ENCODE measurements at regions of chr10 and their contacts with region 1.

Region 1: GRCh38 chr10:102132563-102133372 is at the start of gene PPRC1:
- DNase-seq: peak; percentile 99
- ATAC-seq: peak; percentile 95 to 96
- H3K4me3 ChIP-seq: peak within 1 kb of the TSS; percentile 92
- H3K27ac ChIP-seq: peak within 1 kb of the TSS; percentile 98 to 99
- H3K4me1 ChIP-seq: peaks cover 40% of the 10 kb centered on the region
- CTCF ChIP-seq: peak; percentile 92
- EP300 ChIP-seq: no peak
- POLR2A ChIP-seq: peak; percentile 69
- RAD21 ChIP-seq: peak; percentile 74 to 78
- polyA plus RNA-seq, gene PPRC1: 27.0 and 34.1 TPM in 2 replicates

Region 2: GRCh38 chr10:102114861-102115618 is 17.7 kb before region 1 on chr10:
- CTCF ChIA-PET with region 1: interaction called, 45 read pairs
- POLR2A ChIA-PET with region 1: interaction called, 12 read pairs
- DNase-seq: peak; percentile 73 to 76
- ATAC-seq: peak; percentile 67 to 87
- H3K4me3 ChIP-seq: peak overlapping the region; percentile 90
- H3K27ac ChIP-seq: peak overlapping the region; percentile 95 to 96
- H3K4me1 ChIP-seq: peaks cover 63% of the 10 kb centered on the region
- CTCF ChIP-seq: no peak
- EP300 ChIP-seq: no peak
- POLR2A ChIP-seq: peak; percentile 95
- RAD21 ChIP-seq: no peak

Region 3: GRCh38 chr10:102120142-102120990 is 12.4 kb before region 1 on chr10 and contains the start of gene LDB1:
- CTCF ChIA-PET with region 1: interaction called, 45 read pairs
- POLR2A ChIA-PET with region 1: interaction called, 3 read pairs
- DNase-seq: peak; percentile 72 to 81
- ATAC-seq: peak; percentile 60 to 77
- H3K4me3 ChIP-seq: peak within 1 kb of the TSS; percentile 97
- H3K27ac ChIP-seq: peak within 1 kb of the TSS; percentile 85 to 98
- H3K4me1 ChIP-seq: peaks cover 53% of the 10 kb centered on the region
- CTCF ChIP-seq: peak; percentile 4; the same call in 1 of the 3 replicates
- EP300 ChIP-seq: no peak
- POLR2A ChIP-seq: peak; percentile 62
- RAD21 ChIP-seq: no peak
- polyA plus RNA-seq, gene LDB1: 47.0 and 47.5 TPM in 2 replicates

Region 4: DNA sequence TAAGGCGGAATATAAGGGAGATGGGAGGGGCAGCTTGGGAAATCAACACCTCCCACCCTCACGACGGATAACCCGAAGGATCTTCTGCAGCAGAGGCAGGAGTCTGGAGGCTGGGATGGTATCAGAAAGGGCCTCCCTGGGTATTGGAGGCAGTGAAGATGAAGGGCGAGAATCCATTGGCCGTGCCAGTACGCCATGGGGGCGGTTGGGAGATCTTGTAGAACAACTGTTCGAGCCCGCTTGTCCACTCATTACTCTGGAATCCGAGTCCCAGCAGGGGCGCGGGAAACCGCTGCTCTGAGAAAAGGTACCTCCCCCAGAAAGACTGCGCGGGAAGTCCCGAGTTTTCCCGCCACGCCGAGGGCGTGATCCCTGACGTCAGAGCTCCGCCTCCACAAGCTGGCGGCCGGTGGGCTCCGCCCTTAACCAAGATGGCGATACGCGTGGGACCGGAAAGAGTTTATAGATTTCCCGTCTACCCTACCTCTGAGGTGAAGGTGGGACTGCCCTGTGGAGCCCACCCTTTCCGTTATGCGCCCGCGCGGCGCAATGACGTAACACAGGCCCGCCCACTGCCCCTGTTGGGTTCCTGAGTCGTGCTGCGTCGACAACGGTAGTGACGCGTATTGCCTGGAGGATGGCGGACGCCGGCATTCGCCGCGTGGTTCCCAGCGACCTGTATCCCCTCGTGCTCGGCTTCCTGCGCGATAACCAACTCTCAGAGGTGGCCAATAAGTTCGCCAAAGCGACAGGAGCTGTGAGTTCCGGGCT is 19.2 kb after region 1 on chr10 and contains the start of gene NOLC1:
- CTCF ChIA-PET with region 1: interaction called, 40 read pairs
- POLR2A ChIA-PET with region 1: interaction called, 6 read pairs
- DNase-seq: peak; percentile 92 to 99
- ATAC-seq: peak; percentile 86 to 92
- H3K4me3 ChIP-seq: peak within 1 kb of the TSS; percentile 75
- H3K27ac ChIP-seq: peak within 1 kb of the TSS; percentile 86 to 91
- H3K4me1 ChIP-seq: peaks cover 28% of the 10 kb centered on the region
- CTCF ChIP-seq: no peak
- EP300 ChIP-seq: no peak
- POLR2A ChIP-seq: peak; percentile 94
- RAD21 ChIP-seq: no peak
- polyA plus RNA-seq, gene NOLC1: 128 and 188 TPM in 2 replicates

Region 5: GRCh38 chr10:102167861-102168260 is 35.1 kb after region 1 on chr10:
- CTCF ChIA-PET with region 1: interaction called, 25 read pairs
- POLR2A ChIA-PET with region 1: no interaction called
- DNase-seq: no peak
- ATAC-seq: 0 out of 6 replicates have a peak, but pooled peaks of 1 of the 2 experiments have one; percentile 12
- H3K4me3 ChIP-seq: no peak overlapping the region
- H3K27ac ChIP-seq: no peak overlapping the region
- H3K4me1 ChIP-seq: peaks cover 3% of the 10 kb centered on the region; the same call in 1 of the 3 replicates
- CTCF ChIP-seq: no peak
- EP300 ChIP-seq: no peak
- POLR2A ChIP-seq: no peak
- RAD21 ChIP-seq: no peak

Region 6: DNA sequence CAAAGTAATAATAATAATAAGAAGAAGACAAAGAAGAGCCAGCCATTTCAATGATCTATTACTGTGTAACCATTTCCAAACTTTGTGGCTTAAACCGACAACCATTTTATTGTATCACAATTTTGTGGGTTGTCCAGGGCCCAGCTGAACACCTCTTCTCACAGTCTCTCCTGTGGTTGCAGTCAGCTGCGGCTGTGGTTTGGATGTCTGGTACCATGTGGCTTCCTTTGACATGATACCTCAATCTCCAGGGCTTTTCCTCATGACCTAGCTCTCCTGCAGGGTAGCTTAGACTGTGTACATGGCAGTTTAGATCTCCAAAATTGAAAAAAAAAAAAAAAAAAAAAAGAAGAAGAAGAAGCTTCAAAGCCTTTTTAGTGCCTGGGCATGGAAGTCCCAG is 190.1 kb after region 1 on chr10:
- CTCF ChIA-PET with region 1: no interaction called
- POLR2A ChIA-PET with region 1: no interaction called
- DNase-seq: no peak
- ATAC-seq: no peak; a peak in 1 of 6 replicates
- H3K4me3 ChIP-seq: no peak overlapping the region
- H3K27ac ChIP-seq: no peak overlapping the region
- H3K4me1 ChIP-seq: no peaks in the 10 kb centered on the region
- CTCF ChIP-seq: no peak
- EP300 ChIP-seq: no peak
- POLR2A ChIP-seq: no peak
- RAD21 ChIP-seq: no peak